ENCODE measurements at regions of chr16 and their contacts with region 1.

Region 1: GRCh38 chr16:70267516-70267915 is 15.8 kb upstream of the EXOSC6 start:
- DNase-seq: no peak
- ATAC-seq: no peak

Region 2: GRCh38 chr16:70158261-70158939 is 109.1 kb before region 1 on chr16:
- intact Hi-C with region 1: loop called (anchors 10 kb)
- DNase-seq: no peak
- ATAC-seq: no peak